AG04449 (cell line): ENCODE measurements at regions of chr11 and their contacts with region 1.

Region 1: DNA sequence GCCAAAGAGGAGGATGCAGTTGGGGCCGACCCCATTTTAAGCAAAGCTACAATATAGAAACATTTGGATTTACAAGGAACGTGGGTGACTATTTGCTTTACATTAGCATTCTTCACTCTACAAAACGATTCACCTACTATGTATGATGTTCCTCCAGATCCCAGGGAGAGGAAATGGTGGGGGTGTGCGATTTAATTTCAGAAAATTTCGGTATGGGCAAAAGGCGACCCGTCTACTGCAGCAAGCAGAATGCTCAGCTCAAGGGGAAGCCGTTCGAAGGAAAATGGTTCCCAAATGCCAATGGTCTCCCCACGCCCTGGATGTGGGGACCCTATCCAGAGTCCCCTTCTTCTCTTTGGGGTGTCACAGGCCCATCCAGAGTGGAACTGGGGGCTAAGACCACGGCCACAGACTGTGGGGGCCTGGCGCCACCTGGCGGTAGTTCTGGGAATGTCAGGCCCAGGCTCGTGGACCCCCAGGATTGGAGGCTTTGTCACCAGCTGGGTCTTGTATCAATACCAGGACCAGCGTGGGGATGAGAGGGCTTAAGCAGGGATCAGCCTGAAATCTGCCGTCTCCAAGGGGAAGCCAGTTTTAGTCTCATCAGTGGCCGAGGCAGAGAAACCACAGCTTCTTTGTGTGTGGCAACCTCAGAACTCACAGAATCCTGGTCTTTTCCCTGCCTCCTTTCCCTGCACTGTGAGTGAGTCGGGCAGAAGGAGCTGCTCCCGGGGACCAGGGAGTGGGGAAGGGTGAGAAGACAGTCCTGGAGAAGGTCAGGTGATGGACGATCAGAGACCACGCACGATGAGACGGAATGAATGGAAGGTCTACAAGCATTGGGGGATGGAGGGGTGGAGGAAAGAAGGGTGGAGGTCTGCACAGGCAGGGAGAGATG is 8.4 kb downstream of the LRRC10B start:
- DNase-seq: no peak
- H3K4me3 ChIP-seq: no peak overlapping the region
- CTCF ChIP-seq: peak; percentile 94

Region 2: DNA sequence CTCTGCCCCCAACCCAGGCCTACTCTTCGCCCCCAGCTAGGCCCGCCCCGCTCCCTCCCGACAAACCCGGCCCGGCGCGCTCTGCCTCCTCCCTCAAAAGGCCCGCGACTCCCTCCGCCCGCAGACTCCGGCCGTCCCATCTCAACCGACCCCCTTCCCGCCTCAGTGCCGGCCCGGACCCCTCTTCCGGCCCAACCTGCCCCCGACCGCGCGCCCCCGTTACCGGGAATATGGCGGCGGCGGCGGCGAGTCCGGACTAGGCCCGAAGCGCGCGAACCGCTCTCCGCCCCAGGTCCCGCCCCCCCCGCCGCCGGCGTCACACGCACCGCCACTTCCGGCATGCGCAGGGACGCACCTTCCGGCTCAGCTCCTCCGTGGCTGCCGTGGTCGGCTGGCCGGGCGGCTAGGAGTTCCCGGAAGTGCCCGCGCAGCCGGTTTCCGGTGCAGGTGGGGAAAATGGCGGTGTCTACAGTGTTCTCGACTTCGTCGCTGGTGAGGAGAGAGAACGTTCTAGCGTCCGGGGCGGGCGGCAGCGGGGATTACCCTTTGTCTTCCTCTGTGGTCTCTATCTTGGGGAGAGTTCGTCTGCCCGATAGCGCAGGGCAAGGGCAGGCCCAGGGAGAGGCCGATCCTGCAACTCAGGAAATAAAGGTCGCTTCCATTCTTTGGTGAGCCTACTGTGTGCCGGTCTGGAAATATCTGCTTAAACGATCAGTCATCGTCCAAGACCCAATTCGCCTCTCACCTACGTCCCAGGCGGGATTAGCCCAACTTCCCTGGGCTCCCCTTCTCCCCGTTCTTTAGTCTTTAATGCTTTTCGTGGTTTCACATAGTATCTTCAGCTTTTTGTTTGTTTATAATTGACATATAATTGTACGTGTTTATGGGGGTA is 87.0 kb before region 1 on chr11 and contains the starts of genes CPSF7 and SDHAF2:
- CTCF ChIA-PET with region 1: interaction called, 15 read pairs
- POLR2A ChIA-PET with region 1: no interaction called
- DNase-seq: peak; percentile 63
- H3K4me3 ChIP-seq: peak within 1 kb of the TSS; percentile 99
- CTCF ChIP-seq: no peak

Region 3: GRCh38 chr11:61460474-61460881 is 56.4 kb before region 1 on chr11:
- CTCF ChIA-PET with region 1: interaction called, 18 read pairs
- POLR2A ChIA-PET with region 1: no interaction called
- DNase-seq: no peak
- H3K4me3 ChIP-seq: no peak overlapping the region
- CTCF ChIP-seq: no peak

Region 4: GRCh38 chr11:61488651-61489291 is 28.2 kb before region 1 on chr11:
- CTCF ChIA-PET with region 1: interaction called, 55 read pairs
- POLR2A ChIA-PET with region 1: interaction called, 3 read pairs
- DNase-seq: no peak
- H3K4me3 ChIP-seq: no peak overlapping the region
- CTCF ChIP-seq: no peak

Region 5: GRCh38 chr11:61532139-61533038 is 15.5 kb after region 1 on chr11:
- CTCF ChIA-PET with region 1: interaction called, 132 read pairs
- POLR2A ChIA-PET with region 1: no interaction called
- DNase-seq: no peak
- H3K4me3 ChIP-seq: no peak overlapping the region
- CTCF ChIP-seq: peak; percentile 75

Region 6: GRCh38 chr11:61555978-61556377 is 39.1 kb after region 1 on chr11:
- CTCF ChIA-PET with region 1: interaction called, 16 read pairs
- POLR2A ChIA-PET with region 1: no interaction called
- DNase-seq: no peak
- H3K4me3 ChIP-seq: no peak overlapping the region
- CTCF ChIP-seq: no peak

Region 7: GRCh38 chr11:61639816-61640443 is 123.0 kb after region 1 on chr11:
- CTCF ChIA-PET with region 1: interaction called, 21 read pairs
- POLR2A ChIA-PET with region 1: no interaction called
- DNase-seq: no peak
- H3K4me3 ChIP-seq: no peak overlapping the region
- CTCF ChIP-seq: no peak